Vagina (tissue), 2 donors: ENCODE measurements at regions of chr7 and their contacts with region 1.

Region 1: GRCh38 chr7:158704704-158705468 is at the start of gene NCAPG2:
- DNase-seq: peak in 1 of 2 donors; percentile 97
- H3K4me3 ChIP-seq: peak within 1 kb of the TSS; percentile 69 to 98
- H3K27ac ChIP-seq: peak within 1 kb of the TSS; percentile 82
- H3K4me1 ChIP-seq: peaks cover 14% of the 10 kb centered on the region
- H3K27me3 ChIP-seq: no peaks in the 10 kb centered on the region
- CTCF ChIP-seq: peak in 1 of 3 experiments; percentile 65
- POLR2A ChIP-seq: peak; percentile 55 to 94
- total RNA-seq, gene NCAPG2: 9.6 TPM

Region 2: DNA sequence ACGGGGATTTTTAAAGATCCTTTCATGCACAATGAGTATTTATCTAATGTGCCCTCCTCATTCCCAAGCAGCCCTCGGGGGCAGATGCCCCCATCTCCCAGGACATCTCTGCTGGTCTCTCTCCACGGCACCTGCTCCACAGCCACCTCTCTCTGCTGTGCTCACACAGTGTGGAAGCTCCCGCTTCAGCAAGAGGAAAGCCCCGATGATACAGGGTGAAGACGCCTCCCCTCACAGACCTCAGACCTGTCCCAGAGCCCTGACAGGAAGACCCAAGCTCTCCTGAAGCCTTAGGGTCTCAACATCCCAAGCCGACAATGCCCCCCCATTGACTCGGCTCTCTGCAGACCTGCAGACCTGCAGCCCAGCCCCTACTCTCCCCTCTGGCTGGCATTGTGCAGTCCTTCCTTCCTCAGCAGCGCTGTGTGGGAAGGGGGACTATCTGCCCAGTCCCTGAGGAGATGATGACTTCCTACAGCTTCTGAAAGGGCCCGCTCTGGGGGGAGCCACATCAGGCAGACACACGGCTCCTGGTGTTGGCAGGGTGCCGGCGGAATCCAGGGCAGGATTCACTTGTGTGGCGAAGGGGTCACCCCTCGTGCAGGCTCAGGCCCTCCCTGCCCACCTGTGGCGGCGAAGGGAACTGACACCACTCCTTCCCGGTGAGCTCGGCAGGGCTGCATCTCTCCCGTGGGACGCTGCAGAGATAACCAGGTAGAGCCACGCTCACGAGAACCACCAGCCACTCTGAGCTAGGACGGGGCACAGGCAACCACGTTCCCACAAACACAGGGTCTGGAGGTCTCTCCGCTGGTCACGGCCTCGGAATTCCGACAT is 179.0 kb before region 1 on chr7:
- intact Hi-C with region 1: no loop called
- DNase-seq: no peak
- H3K4me3 ChIP-seq: no peak overlapping the region
- H3K27ac ChIP-seq: no peak overlapping the region
- H3K4me1 ChIP-seq: no peaks in the 10 kb centered on the region
- H3K27me3 ChIP-seq: no peaks in the 10 kb centered on the region
- CTCF ChIP-seq: no peak
- POLR2A ChIP-seq: no peak

Region 3: GRCh38 chr7:158863611-158864506 is 159.0 kb after region 1 on chr7:
- intact Hi-C with region 1: loop called (anchors 10 kb)
- DNase-seq: no peak
- H3K4me3 ChIP-seq: peak overlapping the region; percentile 54 to 64
- H3K27ac ChIP-seq: peak overlapping the region; percentile 90
- H3K4me1 ChIP-seq: peaks cover 32% of the 10 kb centered on the region
- H3K27me3 ChIP-seq: no peaks in the 10 kb centered on the region
- CTCF ChIP-seq: no peak
- POLR2A ChIP-seq: no peak